ENCODE measurements at regions of chr4 and their contacts with region 1.

Region 1: GRCh38 chr4:8468746-8469535 is 28.4 kb downstream of the TRMT44 start:
- DNase-seq: peak; percentile 80
- ATAC-seq: peak; percentile 91
- H3K4me3 Mint-ChIP-seq: no peak overlapping the region
- H3K27ac Mint-ChIP-seq: no peak overlapping the region
- H3K4me1 Mint-ChIP-seq: no peaks in the 10 kb centered on the region
- H3K27me3 Mint-ChIP-seq: no peaks in the 10 kb centered on the region

Region 2: DNA sequence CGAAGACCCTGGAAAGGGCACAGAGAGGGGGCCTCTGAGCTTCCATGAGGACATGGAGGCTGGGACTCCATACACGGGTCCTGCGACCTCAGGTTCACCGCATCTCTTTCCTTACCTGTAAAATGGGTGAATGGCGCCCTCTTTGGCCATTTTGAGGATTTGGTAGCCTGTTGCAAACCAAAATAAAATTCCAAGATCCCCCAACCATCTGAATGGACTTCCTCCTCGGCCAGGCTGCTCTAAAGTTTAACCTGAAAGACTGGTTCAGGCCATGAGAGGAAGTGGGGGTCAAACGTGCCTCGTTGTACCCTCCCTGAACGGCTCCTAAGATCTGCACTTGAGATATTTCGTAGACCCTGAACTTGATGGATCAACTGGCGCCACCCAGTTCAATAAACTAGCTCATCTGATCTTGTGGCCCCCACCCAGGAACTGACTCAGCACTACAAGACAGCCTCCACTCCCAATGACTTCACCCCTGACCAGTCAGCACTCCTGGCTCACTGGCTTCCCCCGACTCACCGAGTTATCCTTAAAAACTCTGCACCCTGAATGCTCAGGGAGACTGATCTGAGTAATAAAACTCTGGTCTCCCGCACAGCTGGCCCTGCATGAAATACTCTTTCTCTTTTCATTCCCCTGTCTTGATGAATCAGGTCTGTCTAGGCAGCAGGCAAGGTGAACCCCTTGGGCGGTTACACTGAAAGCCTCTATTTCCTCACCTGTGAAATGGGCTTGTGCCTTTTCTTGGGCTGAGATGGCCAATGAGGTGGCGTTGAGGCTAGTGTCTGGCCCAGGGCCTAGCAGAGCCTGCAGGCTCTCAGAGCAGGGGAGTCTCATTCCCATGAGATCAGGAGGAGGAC is 78.4 kb after region 1 on chr4:
- CTCF ChIA-PET with region 1: interaction called, 4 read pairs
- POLR2A ChIA-PET with region 1: no interaction called
- intact Hi-C with region 1: loop called (anchors 1 to 2 kb)
- DNase-seq: peak; percentile 42
- ATAC-seq: peak; percentile 47
- H3K4me3 Mint-ChIP-seq: no peak overlapping the region
- H3K27ac Mint-ChIP-seq: no peak overlapping the region
- H3K4me1 Mint-ChIP-seq: no peaks in the 10 kb centered on the region
- H3K27me3 Mint-ChIP-seq: no peaks in the 10 kb centered on the region

Region 3: DNA sequence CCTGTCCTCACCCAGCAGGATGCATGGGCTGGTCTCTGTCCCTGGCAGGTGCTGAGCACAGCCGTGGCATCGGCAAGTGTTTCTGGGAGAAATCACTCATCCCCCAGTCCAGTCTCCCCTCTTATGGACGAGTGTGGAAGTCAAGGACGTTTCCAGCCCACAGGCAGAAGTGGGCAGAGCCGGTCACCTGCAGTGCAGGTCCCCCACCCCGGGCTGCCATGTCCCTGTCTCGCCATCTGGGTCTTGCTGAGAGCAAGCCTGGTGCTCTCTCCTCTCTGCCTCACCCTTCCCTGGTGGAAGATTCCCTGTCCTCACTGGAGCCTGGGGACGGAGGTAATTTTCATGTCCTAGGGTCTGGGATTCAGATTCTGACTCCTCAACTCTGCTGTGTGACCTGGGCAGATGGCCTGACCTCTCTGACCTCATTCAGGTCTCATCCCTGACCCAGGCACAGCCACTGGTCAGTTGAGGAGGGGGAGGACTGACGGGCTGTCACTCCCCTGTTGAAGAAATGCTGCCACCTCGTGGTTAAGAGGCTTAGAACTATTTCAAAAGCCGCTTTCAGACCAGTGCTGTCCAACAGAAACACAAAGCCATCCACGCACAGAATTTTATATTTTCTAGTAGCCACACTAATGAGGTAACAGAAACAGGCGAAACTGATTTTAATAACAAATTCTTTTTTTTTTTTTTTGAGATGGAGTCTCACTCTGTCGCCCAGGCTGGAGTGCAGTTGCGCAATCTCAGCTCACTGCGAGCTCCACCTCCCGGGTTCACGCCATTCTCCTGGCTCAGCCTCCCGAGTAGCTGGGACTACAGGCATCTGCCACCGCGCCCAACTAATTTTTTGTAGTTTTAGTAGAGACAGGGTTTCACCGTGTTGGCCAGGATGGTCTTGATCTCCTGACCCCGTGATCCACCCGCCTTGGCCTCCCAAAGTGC is 125.4 kb after region 1 on chr4:
- CTCF ChIA-PET with region 1: interaction called, 5 read pairs
- POLR2A ChIA-PET with region 1: no interaction called
- intact Hi-C with region 1: loop called (anchors 1 kb)
- DNase-seq: peak; percentile 44
- ATAC-seq: no peak
- H3K4me3 Mint-ChIP-seq: no peak overlapping the region
- H3K27ac Mint-ChIP-seq: no peak overlapping the region
- H3K4me1 Mint-ChIP-seq: no peaks in the 10 kb centered on the region
- H3K27me3 Mint-ChIP-seq: peaks cover 19% of the 10 kb centered on the region

Measured in activated CD4-positive, alpha-beta T cell treated with anti-CD3 and anti-CD28 coated beads for 36 hours (primary cell).